ENCODE measurements at regions of chr15 and their contacts with region 1.

Region 1: DNA sequence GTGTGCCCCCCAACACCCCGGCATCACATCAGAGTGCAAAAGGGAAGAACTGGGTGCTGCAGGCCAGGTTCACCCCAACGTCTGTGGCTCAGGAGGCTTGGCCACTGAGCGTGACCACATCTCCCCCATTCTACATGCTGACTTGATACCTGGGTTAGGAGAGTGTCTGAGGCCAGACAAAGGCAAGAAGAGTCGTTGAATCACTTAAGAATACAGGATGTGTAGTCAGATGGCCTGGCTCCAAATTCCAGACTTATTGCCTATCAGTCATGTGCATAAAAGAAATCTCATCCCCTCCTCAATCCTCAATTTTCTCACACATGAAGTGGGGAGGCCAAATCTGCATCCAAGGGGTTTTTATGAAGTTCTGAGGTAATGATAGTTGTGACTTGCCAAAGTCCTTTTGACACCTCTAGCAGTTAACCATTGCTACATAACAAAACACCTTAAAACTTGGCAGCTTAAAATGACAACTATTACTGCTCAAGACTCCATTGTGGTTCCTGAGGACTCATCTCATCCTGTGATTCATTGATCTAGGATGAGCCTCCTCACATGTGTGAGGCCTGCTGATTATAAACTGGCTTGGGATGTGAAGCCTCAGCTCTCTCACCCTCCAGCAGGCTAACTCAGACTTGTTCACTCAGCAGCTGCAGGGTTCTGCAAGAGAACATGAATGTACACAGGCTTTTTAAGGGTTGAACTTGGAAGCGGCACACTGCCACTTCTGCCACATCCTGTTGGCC is 138.8 kb upstream of the TLE3 start:
- DNase-seq: peak; percentile 53
- ATAC-seq: peak; percentile 83
- H3K4me3 Mint-ChIP-seq: no peak overlapping the region
- H3K27ac Mint-ChIP-seq: no peak overlapping the region
- H3K4me1 Mint-ChIP-seq: peaks cover 31% of the 10 kb centered on the region
- H3K27me3 Mint-ChIP-seq: peaks cover 2% of the 10 kb centered on the region

Region 2: DNA sequence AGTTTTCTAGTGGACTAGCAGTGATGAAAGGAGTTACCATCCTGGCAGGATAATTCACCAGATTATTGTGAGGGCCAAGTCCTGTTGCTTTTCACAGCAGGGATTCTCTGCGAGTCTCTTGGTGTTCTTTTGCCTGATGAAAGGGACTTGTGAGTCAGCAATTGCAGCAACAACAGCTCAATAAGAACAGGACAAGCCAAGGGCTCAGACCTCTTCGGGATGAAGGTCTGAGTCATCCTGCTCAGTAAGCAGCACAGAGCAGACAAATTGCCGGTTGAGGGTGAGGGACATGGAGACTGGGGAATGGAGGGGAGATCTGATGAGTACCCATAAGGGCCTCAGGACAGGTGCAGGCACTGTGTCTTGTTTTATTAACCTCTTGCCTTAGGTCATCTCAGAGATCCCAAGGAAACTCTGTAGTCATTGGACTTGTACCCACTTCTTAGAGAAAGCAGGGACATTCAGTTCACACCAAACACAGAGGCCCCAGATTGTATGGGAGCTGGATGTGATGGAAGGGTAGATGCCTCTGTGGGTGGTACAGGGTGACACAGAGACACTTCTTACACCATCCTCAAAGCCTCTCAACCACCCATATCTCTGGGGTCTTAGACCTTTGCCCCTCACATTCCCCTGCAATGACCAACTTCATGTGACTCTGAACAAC is 35.0 kb after region 1 on chr15:
- CTCF ChIA-PET with region 1: interaction called, 3 read pairs
- POLR2A ChIA-PET with region 1: no interaction called
- intact Hi-C with region 1: loop called in 1 of 2 experiments (anchors 5 kb)
- DNase-seq: no peak
- ATAC-seq: peak; percentile 70
- H3K4me3 Mint-ChIP-seq: no peak overlapping the region
- H3K27ac Mint-ChIP-seq: no peak overlapping the region
- H3K4me1 Mint-ChIP-seq: peaks cover 38% of the 10 kb centered on the region
- H3K27me3 Mint-ChIP-seq: peaks cover 14% of the 10 kb centered on the region

Region 3: GRCh38 chr15:70291295-70291694 is 54.8 kb after region 1 on chr15:
- CTCF ChIA-PET with region 1: no interaction called
- POLR2A ChIA-PET with region 1: no interaction called
- intact Hi-C with region 1: no loop called
- DNase-seq: no peak
- ATAC-seq: no peak
- H3K4me3 Mint-ChIP-seq: no peak overlapping the region
- H3K27ac Mint-ChIP-seq: no peak overlapping the region
- H3K4me1 Mint-ChIP-seq: no peaks in the 10 kb centered on the region
- H3K27me3 Mint-ChIP-seq: no peaks in the 10 kb centered on the region